ENCODE measurements at regions of chr12 and their contacts with region 1.

Region 1: DNA sequence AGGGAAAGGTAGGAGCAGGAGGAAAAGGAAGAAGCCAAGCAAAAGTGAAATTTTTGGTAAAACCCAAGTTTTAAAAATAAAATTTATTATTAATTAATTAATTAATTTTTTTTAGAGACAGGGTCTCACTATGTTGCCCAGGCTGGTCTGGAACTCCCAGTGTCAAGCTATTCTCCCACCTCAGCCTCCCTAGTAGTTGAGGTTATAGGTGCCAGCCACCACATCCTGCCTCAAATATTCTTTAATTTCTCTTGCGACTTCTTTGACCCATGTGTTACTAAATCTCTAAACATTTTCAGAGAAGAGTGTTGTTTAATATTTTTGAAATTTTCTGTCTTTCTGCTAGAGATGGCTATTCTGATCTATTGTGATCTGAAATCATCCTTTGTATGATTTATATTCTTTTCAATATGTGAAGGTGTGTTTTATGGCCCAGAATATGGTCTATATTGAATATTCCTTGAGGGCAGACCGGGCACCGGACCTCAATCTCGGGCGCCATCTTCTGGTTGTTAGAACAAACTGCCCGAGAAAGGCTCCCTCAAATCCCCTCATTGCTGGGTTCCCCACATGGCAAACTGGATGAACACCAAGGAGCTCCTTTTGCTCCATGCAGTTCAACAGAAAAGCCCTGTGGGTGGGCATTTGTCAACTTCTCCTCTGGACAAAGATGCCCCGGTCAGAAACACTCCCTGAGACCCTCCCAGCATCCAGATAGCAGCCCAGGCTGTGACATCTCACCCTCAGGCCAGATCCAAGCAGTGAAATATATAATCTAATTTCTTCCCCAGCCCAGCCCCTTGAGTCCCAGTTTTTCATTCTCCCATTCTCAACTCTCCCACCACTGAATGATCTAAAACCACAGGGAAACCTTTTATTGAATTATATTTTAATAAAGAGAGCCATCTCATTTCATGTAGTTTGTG is 110.5 kb downstream of the ASCL4 start:
- DNase-seq: peak; percentile 21
- ATAC-seq: peak; percentile 73
- H3K4me3 Mint-ChIP-seq: no peak overlapping the region
- H3K27ac Mint-ChIP-seq: no peak overlapping the region
- H3K4me1 Mint-ChIP-seq: no peaks in the 10 kb centered on the region
- H3K27me3 Mint-ChIP-seq: peaks cover 8% of the 10 kb centered on the region
- CTCF ChIP-seq: peak; percentile 32

Region 2: DNA sequence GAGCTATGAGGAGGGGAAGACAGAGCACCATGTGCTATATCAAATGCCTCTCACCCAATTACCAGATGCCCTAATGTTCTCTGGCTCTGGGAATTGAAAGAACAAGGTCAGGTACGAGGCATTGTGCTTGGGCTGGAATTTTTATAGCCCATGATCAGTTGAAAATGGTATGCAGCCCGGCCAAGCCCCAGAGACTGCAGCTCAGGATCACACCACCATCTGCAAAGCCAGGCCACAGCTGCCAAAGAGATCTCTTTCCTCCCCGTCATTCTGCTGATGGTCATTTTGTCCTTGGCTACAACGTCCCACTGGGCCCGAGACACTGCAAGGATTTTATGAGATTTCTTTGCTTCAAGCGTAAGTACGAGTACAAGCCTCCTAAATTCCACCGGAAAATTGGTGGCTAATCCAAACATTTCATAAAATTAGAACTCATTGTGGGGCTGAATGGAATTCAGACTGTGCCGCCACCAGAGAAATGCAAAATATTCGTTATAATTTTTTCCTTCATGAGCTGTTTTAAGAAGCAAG is 1761.4 kb before region 1 on chr12:
- CTCF ChIA-PET with region 1: no interaction called
- POLR2A ChIA-PET with region 1: no interaction called
- intact Hi-C with region 1: no loop called
- DNase-seq: no peak
- ATAC-seq: no peak
- H3K4me3 Mint-ChIP-seq: no peak overlapping the region
- H3K27ac Mint-ChIP-seq: no peak overlapping the region
- H3K4me1 Mint-ChIP-seq: no peaks in the 10 kb centered on the region
- H3K27me3 Mint-ChIP-seq: peaks cover 19% of the 10 kb centered on the region
- CTCF ChIP-seq: no peak

Region 3: DNA sequence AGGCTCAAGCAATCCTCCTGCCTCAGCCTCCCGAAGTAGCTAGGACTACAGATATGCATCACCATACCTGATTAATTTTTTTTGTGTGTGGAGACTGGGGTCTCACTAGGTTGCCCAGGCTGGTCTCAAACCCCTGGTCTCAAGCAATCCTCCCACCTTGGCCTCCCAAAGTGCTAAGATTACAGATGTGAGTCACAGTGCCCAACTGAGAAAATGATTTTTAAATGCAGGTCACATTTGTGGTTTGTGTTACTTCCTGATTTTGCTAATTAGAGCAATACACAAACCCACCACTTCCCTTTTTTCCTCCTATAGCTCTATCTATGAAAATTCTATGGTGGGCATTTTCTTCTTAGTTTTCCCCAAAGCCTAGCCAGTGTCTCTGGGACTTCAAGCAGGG is 974.8 kb before region 1 on chr12:
- CTCF ChIA-PET with region 1: no interaction called
- POLR2A ChIA-PET with region 1: no interaction called
- intact Hi-C with region 1: no loop called
- DNase-seq: no peak
- ATAC-seq: peak; percentile 84
- H3K4me3 Mint-ChIP-seq: peak overlapping the region; percentile 9
- H3K27ac Mint-ChIP-seq: no peak overlapping the region
- H3K4me1 Mint-ChIP-seq: peaks cover 14% of the 10 kb centered on the region
- H3K27me3 Mint-ChIP-seq: peaks cover 79% of the 10 kb centered on the region
- CTCF ChIP-seq: no peak

Region 4: GRCh38 chr12:107131832-107132616 is 753.0 kb before region 1 on chr12:
- CTCF ChIA-PET with region 1: no interaction called
- POLR2A ChIA-PET with region 1: no interaction called
- intact Hi-C with region 1: loop called (anchors 10 kb)
- DNase-seq: no peak
- ATAC-seq: no peak
- H3K4me3 Mint-ChIP-seq: no peak overlapping the region
- H3K27ac Mint-ChIP-seq: no peak overlapping the region
- H3K4me1 Mint-ChIP-seq: no peaks in the 10 kb centered on the region
- H3K27me3 Mint-ChIP-seq: no peaks in the 10 kb centered on the region
- CTCF ChIP-seq: no peak

Region 5: GRCh38 chr12:107670999-107671643 is 213.9 kb before region 1 on chr12:
- CTCF ChIA-PET with region 1: interaction called, 29 read pairs
- POLR2A ChIA-PET with region 1: no interaction called
- intact Hi-C with region 1: loop called (anchors 1 kb)
- DNase-seq: no peak
- ATAC-seq: no peak
- H3K4me3 Mint-ChIP-seq: no peak overlapping the region
- H3K27ac Mint-ChIP-seq: no peak overlapping the region
- H3K4me1 Mint-ChIP-seq: no peaks in the 10 kb centered on the region
- H3K27me3 Mint-ChIP-seq: peaks cover 23% of the 10 kb centered on the region
- CTCF ChIP-seq: no peak

Region 6: DNA sequence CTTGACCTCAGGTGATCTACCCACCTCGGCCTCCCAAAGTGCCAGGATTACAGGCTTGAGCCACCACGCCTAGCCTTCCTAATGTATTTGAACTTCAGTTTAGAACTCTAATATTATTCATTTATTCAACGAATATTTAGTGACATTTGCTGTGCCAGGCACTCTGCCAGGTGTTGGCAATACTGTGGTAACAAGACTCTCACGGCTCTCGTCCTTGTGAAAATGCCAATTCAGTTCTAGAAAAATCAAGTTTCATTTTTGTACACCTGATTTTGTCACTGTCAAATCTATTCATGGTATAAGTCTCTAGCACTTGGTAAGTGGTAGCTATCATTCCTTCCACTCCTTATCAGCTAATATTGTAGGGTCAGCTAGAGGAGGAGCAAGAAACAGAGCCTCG is 205.7 kb before region 1 on chr12:
- CTCF ChIA-PET with region 1: interaction called, 29 read pairs
- POLR2A ChIA-PET with region 1: no interaction called
- intact Hi-C with region 1: loop called (anchors 1 kb)
- DNase-seq: no peak
- ATAC-seq: no peak
- H3K4me3 Mint-ChIP-seq: no peak overlapping the region
- H3K27ac Mint-ChIP-seq: no peak overlapping the region
- H3K4me1 Mint-ChIP-seq: no peaks in the 10 kb centered on the region
- H3K27me3 Mint-ChIP-seq: peaks cover 11% of the 10 kb centered on the region
- CTCF ChIP-seq: no peak

Region 7: GRCh38 chr12:107736914-107737313 is 148.1 kb before region 1 on chr12:
- CTCF ChIA-PET with region 1: interaction called, 6 read pairs
- POLR2A ChIA-PET with region 1: no interaction called
- intact Hi-C with region 1: loop called (anchors 1 kb)
- DNase-seq: peak; percentile 53
- ATAC-seq: peak; percentile 99
- H3K4me3 Mint-ChIP-seq: peak overlapping the region; percentile 53
- H3K27ac Mint-ChIP-seq: peak overlapping the region; percentile 93
- H3K4me1 Mint-ChIP-seq: peaks cover 72% of the 10 kb centered on the region
- H3K27me3 Mint-ChIP-seq: no peaks in the 10 kb centered on the region
- CTCF ChIP-seq: no peak